Activated T-helper 1 cell treated with anti-CD3 and anti-CD28 coated beads, Interleukin-12 subunit alpha, Interleukin-12 subunit beta, Interleukin-2, Interleukin-4 antibody, amounts not matched to agents 30 ng/mL and 10 ng/mL and 1 ng/mL, durations not matched to agents 14 hours and 24 hours and 36 hours (primary cell): ENCODE measurements at regions of chr9 and their contacts with region 1.

Region 1: DNA sequence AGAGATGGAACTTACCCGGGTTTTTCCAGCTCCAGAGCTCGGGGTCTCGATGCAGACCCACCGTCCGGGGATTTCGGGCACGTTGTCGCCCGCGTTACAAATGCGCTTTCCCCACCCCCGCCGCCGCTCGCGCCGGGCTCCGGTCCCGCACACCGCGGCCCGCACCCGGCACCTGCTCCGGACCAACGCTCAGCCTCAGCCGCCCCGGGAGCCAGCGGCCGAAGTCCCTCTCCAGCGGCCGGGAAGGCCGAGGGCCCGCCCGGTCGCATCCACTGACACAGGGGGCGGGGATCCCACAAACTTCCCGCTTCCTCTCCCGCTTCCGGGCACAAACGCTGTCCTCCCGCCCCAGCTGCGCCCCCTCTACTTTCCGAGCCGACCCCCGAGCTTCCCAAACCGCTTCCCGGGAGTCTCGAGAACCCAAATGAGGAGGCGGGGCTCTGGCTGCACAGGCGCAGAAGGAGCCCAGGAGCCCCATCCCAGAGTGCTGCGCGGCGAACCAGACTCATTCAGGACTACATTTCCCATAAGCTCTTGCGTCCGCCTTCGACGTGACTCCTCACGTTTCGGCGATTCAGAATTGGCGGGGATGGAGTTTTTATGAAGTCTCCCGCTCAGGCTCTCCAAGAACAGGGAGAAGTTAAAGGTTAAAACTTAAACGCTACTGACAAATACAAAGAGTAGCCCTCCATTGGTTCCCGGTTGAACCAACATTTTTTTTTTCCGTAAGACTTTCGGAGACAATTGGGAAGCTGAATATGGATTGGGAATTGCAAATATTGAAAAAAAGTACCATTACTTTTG is at the start of gene ZNF782:
- DNase-seq: peak; percentile 81
- H3K4me3 Mint-ChIP-seq: peak within 1 kb of the TSS; percentile 100
- H3K27ac Mint-ChIP-seq: peak within 1 kb of the TSS; percentile 99
- H3K4me1 Mint-ChIP-seq: peaks cover 43% of the 10 kb centered on the region
- H3K27me3 Mint-ChIP-seq: peaks cover 21% of the 10 kb centered on the region
- total RNA-seq, gene ZNF782: 3.8 and 4.4 TPM in 2 replicates

Region 2: GRCh38 chr9:96256800-96257199 is 597.5 kb before region 1 on chr9:
- intact Hi-C with region 1: no loop called
- DNase-seq: no peak
- H3K4me3 Mint-ChIP-seq: no peak overlapping the region
- H3K27ac Mint-ChIP-seq: no peak overlapping the region
- H3K4me1 Mint-ChIP-seq: peaks cover 5% of the 10 kb centered on the region
- H3K27me3 Mint-ChIP-seq: peaks cover 26% of the 10 kb centered on the region

Region 3: DNA sequence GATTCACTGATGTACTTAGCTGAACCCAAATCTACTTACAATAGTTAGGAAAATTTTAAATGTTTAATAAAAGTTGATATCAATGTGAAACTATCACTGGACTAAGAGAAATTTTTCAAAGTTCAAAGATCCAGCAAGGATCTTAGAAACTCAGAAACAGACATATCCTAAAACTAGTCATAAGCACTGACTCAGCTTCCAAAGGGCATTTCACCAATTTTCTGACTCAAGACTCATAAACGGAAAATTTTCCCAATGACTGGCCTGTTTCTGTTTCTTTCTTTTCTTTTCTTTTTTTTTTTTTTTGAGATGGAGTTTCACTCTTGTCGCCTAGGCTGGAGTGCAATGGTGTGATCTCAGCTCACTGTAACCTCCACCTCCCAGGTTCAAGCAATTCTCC is 301.2 kb before region 1 on chr9:
- intact Hi-C with region 1: no loop called
- DNase-seq: no peak
- H3K4me3 Mint-ChIP-seq: no peak overlapping the region
- H3K27ac Mint-ChIP-seq: no peak overlapping the region
- H3K4me1 Mint-ChIP-seq: peaks cover 39% of the 10 kb centered on the region
- H3K27me3 Mint-ChIP-seq: peaks cover 5% of the 10 kb centered on the region

Region 4: DNA sequence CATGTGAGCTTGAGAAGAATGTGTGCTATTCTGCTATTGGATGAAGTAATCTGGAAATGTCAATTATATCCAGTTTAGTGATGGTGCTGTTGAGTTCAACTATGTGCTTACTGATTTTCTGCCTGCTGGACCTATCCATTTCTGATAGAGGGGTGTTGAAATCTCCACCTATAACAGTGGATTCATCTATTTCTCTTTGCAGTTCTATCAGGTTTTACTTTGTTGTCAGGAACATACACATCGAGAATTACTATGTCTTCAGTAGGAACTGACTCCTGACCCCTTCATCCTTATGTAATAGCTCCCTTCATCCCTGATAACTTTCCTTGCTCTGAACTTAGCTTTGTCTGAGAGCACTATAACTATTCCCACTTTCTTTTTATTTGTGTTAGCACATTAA is 217.9 kb before region 1 on chr9:
- intact Hi-C with region 1: no loop called
- DNase-seq: no peak
- H3K4me3 Mint-ChIP-seq: no peak overlapping the region
- H3K27ac Mint-ChIP-seq: no peak overlapping the region
- H3K4me1 Mint-ChIP-seq: no peaks in the 10 kb centered on the region
- H3K27me3 Mint-ChIP-seq: peaks cover 14% of the 10 kb centered on the region

Region 5: GRCh38 chr9:96654443-96655197 is 199.7 kb before region 1 on chr9:
- intact Hi-C with region 1: loop called (anchors 1 kb)
- DNase-seq: peak; percentile 50
- H3K4me3 Mint-ChIP-seq: peak overlapping the region; percentile 88
- H3K27ac Mint-ChIP-seq: peak overlapping the region; percentile 72
- H3K4me1 Mint-ChIP-seq: peaks cover 11% of the 10 kb centered on the region
- H3K27me3 Mint-ChIP-seq: peaks cover 6% of the 10 kb centered on the region

Region 6: DNA sequence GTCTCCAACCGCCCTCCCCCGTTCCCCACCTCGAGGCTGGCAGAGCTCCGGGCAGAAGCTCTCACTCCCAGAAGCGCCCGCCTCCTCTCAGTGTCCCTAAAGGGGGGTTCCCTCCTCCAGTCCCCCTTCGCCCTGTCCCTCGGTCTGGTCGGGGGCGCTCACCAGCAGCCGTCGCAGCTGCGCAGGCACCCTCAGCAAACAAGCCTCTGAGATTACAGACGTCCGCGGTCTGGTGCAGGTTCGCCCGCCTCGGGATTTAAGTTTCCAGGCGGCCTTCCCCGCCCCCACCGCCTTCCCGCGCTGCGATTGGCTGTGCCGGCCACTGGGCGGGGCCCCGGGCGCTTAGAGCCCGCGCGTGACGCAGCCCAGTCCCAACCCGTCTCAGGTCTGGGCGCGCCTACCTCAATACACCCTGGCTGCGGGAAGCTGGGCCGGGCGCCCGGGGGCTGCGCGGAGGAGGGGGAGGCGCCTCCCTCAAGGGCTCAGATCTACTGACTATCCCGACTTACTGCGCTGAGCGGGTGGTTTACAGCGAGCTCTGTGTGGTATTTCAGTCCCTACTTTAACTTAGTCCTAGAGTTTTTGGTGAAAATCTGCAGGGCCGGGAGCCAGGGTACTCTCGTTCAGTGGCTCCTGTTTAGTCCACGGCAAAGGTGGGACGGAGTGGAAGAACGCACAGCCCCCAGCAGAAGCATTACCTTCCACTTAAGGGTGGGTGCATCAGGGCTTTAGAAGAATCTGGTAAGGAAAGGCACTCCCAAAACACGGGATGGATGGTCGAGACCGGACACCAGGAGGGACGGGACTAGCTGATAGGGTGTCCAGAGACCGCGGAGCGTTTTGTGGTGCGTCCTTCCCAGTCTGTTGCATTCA is 184.9 kb after region 1 on chr9 and contains the start of gene CTSV:
- intact Hi-C with region 1: loop called (anchors 1 kb)
- DNase-seq: peak; percentile 79
- H3K4me3 Mint-ChIP-seq: peak within 1 kb of the TSS; percentile 85
- H3K27ac Mint-ChIP-seq: no peak within 1 kb of the TSS
- H3K4me1 Mint-ChIP-seq: peaks cover 5% of the 10 kb centered on the region
- H3K27me3 Mint-ChIP-seq: peaks cover 45% of the 10 kb centered on the region
- total RNA-seq, gene CTSV: 0.24 and 0.31 TPM in 2 replicates

Region 7: GRCh38 chr9:97220894-97221477 is 366.7 kb after region 1 on chr9:
- intact Hi-C with region 1: loop called (anchors 5 kb)
- DNase-seq: no peak
- H3K4me3 Mint-ChIP-seq: peak overlapping the region; percentile 70
- H3K27ac Mint-ChIP-seq: peak overlapping the region; percentile 23
- H3K4me1 Mint-ChIP-seq: peaks cover 5% of the 10 kb centered on the region
- H3K27me3 Mint-ChIP-seq: peaks cover 61% of the 10 kb centered on the region

Region 8: DNA sequence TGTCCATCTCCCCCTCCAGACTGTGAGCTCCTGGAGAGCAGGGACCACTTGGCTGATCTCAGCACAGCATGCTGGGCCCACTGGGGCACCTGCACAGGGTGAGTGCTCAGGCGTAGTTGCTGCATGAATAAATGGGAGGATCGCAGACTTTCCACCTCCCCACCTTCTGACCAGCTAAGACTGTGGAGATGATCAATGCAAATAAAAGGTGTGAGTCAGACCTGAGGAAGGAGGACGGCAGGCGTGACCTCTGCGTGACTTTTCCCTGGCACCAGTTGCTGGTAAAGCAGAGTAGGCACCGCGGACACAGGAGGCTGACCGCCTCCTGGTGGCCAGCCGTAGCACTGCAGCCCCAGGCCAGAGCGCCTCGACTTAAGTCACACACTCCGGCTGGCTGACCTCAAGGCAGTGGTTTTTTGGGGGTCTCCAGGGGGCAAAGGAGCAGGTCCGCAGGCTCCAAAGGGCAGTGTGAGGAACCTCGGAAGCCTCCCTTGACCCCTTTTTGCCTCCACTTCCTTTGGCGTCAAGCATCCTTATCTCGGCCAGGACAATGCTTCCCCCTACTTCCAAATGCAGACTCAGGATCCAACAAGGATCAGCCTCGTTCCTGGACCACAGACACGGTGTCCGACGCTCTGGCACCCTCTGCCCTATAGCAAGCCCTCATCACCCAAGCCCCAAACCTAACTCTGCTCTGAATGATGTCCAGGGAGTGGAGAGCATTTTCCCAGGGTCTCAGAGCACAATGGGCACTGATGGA is 544.9 kb after region 1 on chr9:
- intact Hi-C with region 1: loop called (anchors 1 kb)
- DNase-seq: peak; percentile 52
- H3K4me3 Mint-ChIP-seq: no peak overlapping the region
- H3K27ac Mint-ChIP-seq: peak overlapping the region; percentile 53
- H3K4me1 Mint-ChIP-seq: peaks cover 29% of the 10 kb centered on the region
- H3K27me3 Mint-ChIP-seq: peaks cover 42% of the 10 kb centered on the region

Region 9: DNA sequence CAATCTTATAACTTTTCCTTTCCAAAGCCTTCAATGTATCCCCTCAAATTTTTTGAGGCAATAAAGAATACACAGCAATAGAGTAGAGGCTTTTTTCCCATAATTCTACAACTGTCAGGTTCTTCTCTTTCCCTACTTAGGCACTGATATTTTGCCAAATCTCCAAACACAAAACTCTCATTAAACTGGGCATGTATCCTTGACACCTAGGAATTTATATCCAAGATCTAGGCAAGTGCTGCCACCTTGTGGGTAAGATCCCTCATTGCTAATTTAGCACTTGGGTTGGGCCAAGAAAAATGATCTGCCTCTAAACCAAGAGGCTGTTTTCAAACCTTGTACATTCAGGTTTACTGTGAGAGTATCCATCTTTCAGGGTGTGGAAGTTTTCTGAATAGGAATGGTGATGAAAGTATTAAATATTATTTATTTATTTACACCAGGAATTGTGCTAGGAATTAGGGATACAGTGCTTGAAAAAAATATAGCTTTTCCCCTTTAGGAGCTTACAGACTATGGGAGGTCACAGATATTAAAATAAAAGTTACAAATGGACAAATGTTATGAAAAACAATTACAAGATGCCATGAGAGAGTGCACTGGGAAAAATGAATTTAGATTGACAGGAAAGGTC is 761.3 kb after region 1 on chr9:
- intact Hi-C with region 1: loop called (anchors 2 kb)
- DNase-seq: peak; percentile 40
- H3K4me3 Mint-ChIP-seq: no peak overlapping the region
- H3K27ac Mint-ChIP-seq: no peak overlapping the region
- H3K4me1 Mint-ChIP-seq: peaks cover 16% of the 10 kb centered on the region
- H3K27me3 Mint-ChIP-seq: no peaks in the 10 kb centered on the region